ENCODE measurements at regions of chr16 and their contacts with region 1.

Region 1: GRCh38 chr16:1378804-1379303 is 27.1 kb downstream of the GNPTG start:
- DNase-seq: peak; percentile 75
- ATAC-seq: peak; percentile 73
- H3K4me3 ChIP-seq: peak overlapping the region; percentile 87
- H3K27ac ChIP-seq: peak overlapping the region; percentile 86
- H3K4me1 ChIP-seq: peaks cover 13% of the 10 kb centered on the region
- H3K27me3 ChIP-seq: no peaks in the 10 kb centered on the region
- CTCF ChIP-seq: no peak

Region 2: GRCh38 chr16:861446-861845 is 517.4 kb before region 1 on chr16:
- CTCF ChIA-PET with region 1: no interaction called
- POLR2A ChIA-PET with region 1: no interaction called
- intact Hi-C with region 1: no loop called
- DNase-seq: no peak
- ATAC-seq: no peak
- H3K4me3 ChIP-seq: no peak overlapping the region
- H3K27ac ChIP-seq: no peak overlapping the region
- H3K4me1 ChIP-seq: no peaks in the 10 kb centered on the region
- H3K27me3 ChIP-seq: no peaks in the 10 kb centered on the region
- CTCF ChIP-seq: no peak

Region 3: GRCh38 chr16:1944612-1945199 is 565.9 kb after region 1 on chr16:
- CTCF ChIA-PET with region 1: no interaction called
- POLR2A ChIA-PET with region 1: interaction called, 12 read pairs
- intact Hi-C with region 1: no loop called
- DNase-seq: no peak
- ATAC-seq: no peak
- H3K4me3 ChIP-seq: no peak overlapping the region
- H3K27ac ChIP-seq: no peak overlapping the region
- H3K4me1 ChIP-seq: peaks cover 11% of the 10 kb centered on the region
- H3K27me3 ChIP-seq: no peaks in the 10 kb centered on the region
- CTCF ChIP-seq: no peak

Measured in PC-3 (cell line).